PC-9 (cell line): ENCODE measurements at regions of chr10 and their contacts with region 1.

Region 1: GRCh38 chr10:23918839-23919238 is 290.1 kb upstream of the KIAA1217 start:
- DNase-seq: no peak
- H3K4me3 ChIP-seq: no peak overlapping the region
- H3K27ac ChIP-seq: no peak overlapping the region
- H3K4me1 ChIP-seq: no peaks in the 10 kb centered on the region
- H3K27me3 ChIP-seq: no peaks in the 10 kb centered on the region
- CTCF ChIP-seq: no peak

Region 2: GRCh38 chr10:23676291-23676690 is 242.5 kb before region 1 on chr10:
- CTCF ChIA-PET with region 1: no interaction called
- POLR2A ChIA-PET with region 1: no interaction called
- intact Hi-C with region 1: no loop called
- DNase-seq: no peak
- H3K4me3 ChIP-seq: no peak overlapping the region
- H3K27ac ChIP-seq: no peak overlapping the region
- H3K4me1 ChIP-seq: no peaks in the 10 kb centered on the region
- H3K27me3 ChIP-seq: 0 out of 2 replicates have a peak, but pooled peaks cover 5% of the 10 kb centered on the region
- CTCF ChIP-seq: no peak

Region 3: DNA sequence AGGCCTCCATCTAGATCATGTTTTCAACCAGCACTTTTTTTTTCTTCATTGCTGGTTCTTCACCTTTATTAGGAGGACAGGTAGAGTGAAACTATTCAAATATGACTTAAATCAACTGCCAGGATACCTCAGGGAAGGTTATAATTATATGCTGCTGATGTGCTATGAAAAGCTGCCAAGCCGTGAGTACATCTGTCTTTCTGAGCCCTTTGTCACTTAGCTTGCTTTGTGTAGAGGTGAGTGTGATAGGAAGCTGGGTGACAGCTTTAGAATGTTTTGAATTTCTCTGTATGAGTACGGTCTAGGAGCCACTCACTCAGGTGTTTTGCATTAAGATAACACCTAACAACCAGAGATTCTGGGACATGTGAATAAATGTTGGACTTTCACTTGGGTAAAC is 114.7 kb before region 1 on chr10:
- CTCF ChIA-PET with region 1: no interaction called
- POLR2A ChIA-PET with region 1: no interaction called
- intact Hi-C with region 1: no loop called
- DNase-seq: no peak
- H3K4me3 ChIP-seq: no peak overlapping the region
- H3K27ac ChIP-seq: no peak overlapping the region
- H3K4me1 ChIP-seq: no peaks in the 10 kb centered on the region
- H3K27me3 ChIP-seq: no peaks in the 10 kb centered on the region
- CTCF ChIP-seq: no peak

Region 4: DNA sequence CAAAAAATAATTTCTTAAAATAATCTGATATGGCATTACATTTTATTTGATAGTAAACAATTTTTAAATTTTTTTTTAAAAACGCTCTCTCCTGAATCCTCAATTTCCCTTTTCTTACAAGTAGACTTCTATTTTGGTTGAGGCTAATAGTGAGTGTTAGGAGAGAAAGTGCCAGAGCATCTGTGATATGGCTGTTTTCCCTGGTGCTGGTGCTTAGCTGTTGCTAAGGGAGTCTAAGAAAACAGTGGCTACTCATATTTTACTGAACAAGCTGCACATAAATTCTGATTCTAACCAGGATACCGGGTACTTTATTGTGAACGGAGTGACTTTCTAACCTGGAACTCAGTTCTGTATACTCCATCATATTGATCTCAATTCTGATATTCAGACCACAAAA is 21.0 kb before region 1 on chr10:
- CTCF ChIA-PET with region 1: no interaction called
- POLR2A ChIA-PET with region 1: interaction called, 11 read pairs
- intact Hi-C with region 1: no loop called
- DNase-seq: no peak
- H3K4me3 ChIP-seq: no peak overlapping the region
- H3K27ac ChIP-seq: no peak overlapping the region
- H3K4me1 ChIP-seq: no peaks in the 10 kb centered on the region
- H3K27me3 ChIP-seq: no peaks in the 10 kb centered on the region
- CTCF ChIP-seq: no peak

Region 5: DNA sequence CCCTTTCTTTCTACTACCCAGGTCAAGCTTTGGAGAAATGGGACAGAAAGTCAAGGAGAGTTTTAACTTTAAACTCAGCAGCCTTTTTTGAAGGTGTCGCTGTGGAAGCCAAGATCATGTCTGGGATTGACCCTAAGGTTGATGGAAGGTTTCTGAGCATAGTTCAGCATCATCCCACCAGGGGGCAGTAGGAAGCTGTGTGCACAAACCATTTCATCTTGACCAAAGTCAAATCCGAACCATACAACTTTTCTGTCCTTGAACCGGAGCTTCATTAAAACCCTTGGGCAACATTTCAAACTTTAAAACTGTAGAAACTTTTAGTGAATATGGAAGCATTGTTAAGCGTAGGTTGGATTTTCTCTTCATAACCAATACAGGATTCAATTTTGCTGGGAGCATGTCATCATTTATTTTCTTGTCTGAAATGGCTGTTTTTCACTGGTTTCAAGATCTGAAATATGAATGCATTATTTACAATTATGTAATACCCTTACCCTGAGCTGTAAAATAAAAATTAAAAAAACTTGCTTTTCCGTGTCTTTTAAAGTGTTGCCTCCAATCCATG is 75.7 kb after region 1 on chr10:
- CTCF ChIA-PET with region 1: no interaction called
- POLR2A ChIA-PET with region 1: no interaction called
- intact Hi-C with region 1: no loop called
- DNase-seq: peak in 1 of 2 experiments; percentile 52
- H3K4me3 ChIP-seq: no peak overlapping the region
- H3K27ac ChIP-seq: no peak overlapping the region
- H3K4me1 ChIP-seq: no peaks in the 10 kb centered on the region
- H3K27me3 ChIP-seq: no peaks in the 10 kb centered on the region
- CTCF ChIP-seq: peak; percentile 81

Region 6: DNA sequence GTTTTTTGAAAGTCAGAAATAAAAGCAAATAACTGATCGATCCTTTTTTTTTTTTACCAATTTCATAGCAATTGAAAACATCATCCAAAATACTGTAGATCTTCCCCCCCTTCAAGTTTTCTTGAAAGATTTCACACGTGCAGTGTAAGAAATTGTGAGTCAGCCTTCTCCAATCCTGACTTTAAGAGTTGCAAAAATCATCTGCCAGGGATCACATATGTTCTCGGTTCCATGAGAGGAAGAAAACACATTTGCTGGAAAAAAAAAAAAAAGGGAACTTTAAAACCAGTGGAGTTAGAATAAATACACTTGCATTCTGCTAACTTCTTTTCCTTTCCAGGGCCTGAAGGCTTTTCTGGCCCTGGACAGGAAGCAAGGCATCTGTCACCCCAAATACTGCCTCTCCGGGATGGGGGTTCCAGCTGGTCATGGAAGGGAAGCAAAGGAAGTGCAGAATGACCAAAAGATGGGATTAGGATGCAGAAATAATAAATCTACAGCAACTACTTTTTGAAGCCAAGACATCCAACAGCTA is 91.7 kb after region 1 on chr10:
- CTCF ChIA-PET with region 1: no interaction called
- POLR2A ChIA-PET with region 1: no interaction called
- intact Hi-C with region 1: no loop called
- DNase-seq: no peak
- H3K4me3 ChIP-seq: no peak overlapping the region
- H3K27ac ChIP-seq: no peak overlapping the region
- H3K4me1 ChIP-seq: no peaks in the 10 kb centered on the region
- H3K27me3 ChIP-seq: no peaks in the 10 kb centered on the region
- CTCF ChIP-seq: no peak